ENCODE measurements at regions of chr6 and their contacts with region 1.

Region 1: DNA sequence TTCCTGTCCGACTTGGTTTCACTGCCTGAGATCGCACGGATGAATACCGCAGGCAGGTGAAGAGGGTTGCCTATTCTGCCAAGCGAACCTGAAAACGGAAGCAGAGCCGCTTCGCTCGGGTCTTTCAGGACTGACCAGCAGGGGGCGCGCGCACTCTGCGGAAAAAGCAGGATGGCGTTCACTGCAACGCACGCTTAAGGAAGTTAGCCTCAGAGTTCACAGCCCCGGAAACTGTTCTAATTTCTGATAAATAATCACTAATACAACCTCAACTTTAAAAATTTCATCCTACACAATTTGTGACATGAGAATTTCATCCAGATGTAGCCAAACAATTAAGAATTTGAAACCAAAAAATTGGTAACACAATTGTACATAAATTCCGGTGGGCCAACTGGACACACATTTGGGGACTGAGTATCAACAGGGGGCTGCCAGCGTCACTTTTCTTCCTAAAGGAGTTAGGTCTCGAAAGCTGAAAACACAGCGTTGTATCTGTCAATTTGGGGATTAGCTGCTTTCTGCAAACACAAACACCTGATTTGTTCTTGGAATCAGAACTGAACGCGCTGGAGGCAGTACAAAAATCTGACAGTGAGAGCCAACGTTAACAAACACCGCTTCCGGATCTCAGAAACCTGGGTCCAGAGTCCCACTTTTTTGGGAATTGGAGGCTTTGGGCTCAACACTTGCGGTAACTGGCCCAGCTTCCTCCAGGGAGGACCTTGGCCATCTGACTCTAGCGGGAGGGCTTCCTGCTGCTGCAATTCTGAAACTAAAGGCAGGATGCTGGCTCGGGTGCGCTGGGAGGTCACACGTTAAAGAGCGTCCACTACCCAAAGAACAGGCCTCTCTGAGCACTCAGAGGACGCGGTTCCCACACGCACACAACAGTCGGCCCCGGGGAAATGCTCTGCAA is 8.8 kb downstream of the PXDC1 start:
- DNase-seq: peak; percentile 63 to 85
- H3K4me3 ChIP-seq: no peak overlapping the region
- H3K27ac ChIP-seq: no peak overlapping the region
- H3K4me1 ChIP-seq: peaks cover 5% of the 10 kb centered on the region; the same call in 1 of the 2 replicates
- H3K27me3 ChIP-seq: no peaks in the 10 kb centered on the region
- CTCF ChIP-seq: peak; percentile 82

Region 2: GRCh38 chr6:3456755-3457466 is 285.8 kb before region 1 on chr6 and contains the start of gene SLC22A23:
- CTCF ChIA-PET with region 1: no interaction called
- POLR2A ChIA-PET with region 1: no interaction called
- intact Hi-C with region 1: no loop called
- DNase-seq: peak; percentile 47 to 83
- H3K4me3 ChIP-seq: peak within 1 kb of the TSS; percentile 84
- H3K27ac ChIP-seq: no peak within 1 kb of the TSS
- H3K4me1 ChIP-seq: peaks cover 14% of the 10 kb centered on the region
- H3K27me3 ChIP-seq: no peaks in the 10 kb centered on the region
- CTCF ChIP-seq: peak; percentile 58; the same call in 1 of the 2 replicates
- total RNA-seq, gene SLC22A23: 13.5 and 16.3 TPM in 2 replicates

Region 3: GRCh38 chr6:3721810-3722626 is 20.7 kb before region 1 on chr6:
- CTCF ChIA-PET with region 1: no interaction called
- POLR2A ChIA-PET with region 1: no interaction called
- intact Hi-C with region 1: no loop called
- DNase-seq: no peak
- H3K4me3 ChIP-seq: no peak overlapping the region
- H3K27ac ChIP-seq: no peak overlapping the region
- H3K4me1 ChIP-seq: no peaks in the 10 kb centered on the region
- H3K27me3 ChIP-seq: no peaks in the 10 kb centered on the region
- CTCF ChIP-seq: no peak

Region 4: GRCh38 chr6:3813150-3813780 is 70.6 kb after region 1 on chr6:
- CTCF ChIA-PET with region 1: no interaction called
- POLR2A ChIA-PET with region 1: no interaction called
- intact Hi-C with region 1: no loop called
- DNase-seq: peak; percentile 40 to 54
- H3K4me3 ChIP-seq: no peak overlapping the region
- H3K27ac ChIP-seq: no peak overlapping the region; the same call in 1 of the 2 replicates
- H3K4me1 ChIP-seq: peaks cover 37% of the 10 kb centered on the region
- H3K27me3 ChIP-seq: no peaks in the 10 kb centered on the region
- CTCF ChIP-seq: no peak

Region 5: DNA sequence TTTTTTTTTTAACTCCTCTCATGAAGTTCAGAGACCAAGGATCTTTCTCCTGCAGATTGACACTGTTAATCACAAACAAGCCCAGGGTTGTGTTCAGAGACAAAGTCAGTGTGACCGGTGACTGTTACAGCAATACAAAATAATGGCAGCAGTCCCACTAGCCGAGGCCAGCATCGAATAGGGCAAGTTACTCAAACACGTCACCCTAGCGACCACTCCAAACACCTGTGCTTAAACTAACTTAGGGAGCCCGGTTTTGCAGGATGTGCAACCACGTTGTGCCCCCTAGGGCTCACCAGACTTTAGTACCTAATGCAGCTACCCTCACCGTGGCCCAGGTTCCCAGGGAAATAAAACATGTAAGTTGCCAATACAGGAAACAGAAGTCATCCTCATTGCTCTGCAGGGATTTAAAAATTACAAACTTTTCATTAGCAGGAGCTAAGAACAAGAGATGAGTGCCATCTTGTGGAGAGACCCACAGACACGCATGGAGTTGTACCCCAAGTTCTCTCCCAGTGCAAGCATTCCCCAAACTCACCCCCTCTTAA is 144.5 kb after region 1 on chr6:
- CTCF ChIA-PET with region 1: no interaction called
- POLR2A ChIA-PET with region 1: no interaction called
- intact Hi-C with region 1: loop called (anchors 2 kb)
- DNase-seq: peak; percentile 28 to 69
- H3K4me3 ChIP-seq: no peak overlapping the region
- H3K27ac ChIP-seq: no peak overlapping the region
- H3K4me1 ChIP-seq: peaks cover 40% of the 10 kb centered on the region
- H3K27me3 ChIP-seq: no peaks in the 10 kb centered on the region
- CTCF ChIP-seq: 0 out of 2 replicates have a peak, but pooled peaks have one; percentile 37

Region 6: GRCh38 chr6:3919130-3919628 is 176.5 kb after region 1 on chr6:
- CTCF ChIA-PET with region 1: no interaction called
- POLR2A ChIA-PET with region 1: no interaction called
- intact Hi-C with region 1: no loop called
- DNase-seq: peak; percentile 48 to 90
- H3K4me3 ChIP-seq: no peak overlapping the region
- H3K27ac ChIP-seq: peak overlapping the region; percentile 50
- H3K4me1 ChIP-seq: peaks cover 17% of the 10 kb centered on the region
- H3K27me3 ChIP-seq: no peaks in the 10 kb centered on the region
- CTCF ChIP-seq: no peak

Region 7: GRCh38 chr6:3929281-3929798 is 186.7 kb after region 1 on chr6:
- CTCF ChIA-PET with region 1: no interaction called
- POLR2A ChIA-PET with region 1: no interaction called
- intact Hi-C with region 1: loop called (anchors 5 kb)
- DNase-seq: no peak
- H3K4me3 ChIP-seq: no peak overlapping the region
- H3K27ac ChIP-seq: no peak overlapping the region
- H3K4me1 ChIP-seq: no peaks in the 10 kb centered on the region
- H3K27me3 ChIP-seq: no peaks in the 10 kb centered on the region
- CTCF ChIP-seq: no peak

Region 8: GRCh38 chr6:3977875-3978711 is 235.4 kb after region 1 on chr6:
- CTCF ChIA-PET with region 1: no interaction called
- POLR2A ChIA-PET with region 1: no interaction called
- intact Hi-C with region 1: loop called (anchors 1 kb)
- DNase-seq: peak; percentile 43 to 65
- H3K4me3 ChIP-seq: no peak overlapping the region
- H3K27ac ChIP-seq: no peak overlapping the region
- H3K4me1 ChIP-seq: no peaks in the 10 kb centered on the region
- H3K27me3 ChIP-seq: no peaks in the 10 kb centered on the region
- CTCF ChIP-seq: peak; percentile 73

Region 9: DNA sequence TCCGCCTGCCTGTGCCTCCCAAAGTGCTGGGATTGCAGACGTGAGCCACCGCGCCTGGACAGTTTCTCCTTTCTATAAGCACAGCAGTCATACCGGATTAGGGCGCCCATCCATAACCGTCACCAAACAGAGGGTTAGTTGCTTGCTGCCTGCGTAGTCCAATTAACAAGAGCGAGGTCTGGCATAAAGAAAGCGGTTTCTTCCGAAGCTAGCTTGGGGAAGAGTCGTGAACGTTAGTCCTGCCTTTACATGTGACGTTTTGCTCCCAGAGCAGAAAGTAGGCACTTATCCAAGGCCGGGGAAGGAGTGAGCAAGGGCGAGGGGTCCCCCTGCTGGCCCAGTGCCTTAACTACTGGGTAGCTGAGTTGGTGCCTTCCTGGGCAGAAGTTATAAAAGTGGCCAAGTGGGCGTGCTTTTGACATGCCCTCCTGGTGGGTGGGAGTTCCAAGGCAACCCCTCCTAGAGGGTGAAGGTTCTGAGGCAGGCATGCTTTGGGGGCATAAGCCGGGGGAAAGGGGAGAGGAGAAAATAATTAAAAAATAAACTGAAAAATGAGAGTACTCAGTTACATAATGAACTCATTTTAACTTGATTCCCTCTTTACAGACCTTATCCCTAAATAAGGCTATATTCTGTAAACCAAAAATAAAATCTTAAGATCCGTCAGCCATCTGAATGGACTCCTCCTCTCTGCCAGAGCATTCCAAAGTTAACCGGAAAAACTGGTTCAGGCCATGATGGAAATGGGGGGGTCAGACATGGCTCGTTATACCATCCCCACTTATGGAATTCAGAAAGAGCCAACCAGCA is 248.2 kb after region 1 on chr6:
- CTCF ChIA-PET with region 1: interaction called, 3 read pairs
- POLR2A ChIA-PET with region 1: no interaction called
- intact Hi-C with region 1: loop called (anchors 1 kb)
- DNase-seq: peak; percentile 53 to 80
- H3K4me3 ChIP-seq: peak overlapping the region; percentile 39; the same call in 1 of the 2 replicates
- H3K27ac ChIP-seq: peak overlapping the region; percentile 47; the same call in 1 of the 2 replicates
- H3K4me1 ChIP-seq: peaks cover 14% of the 10 kb centered on the region
- H3K27me3 ChIP-seq: no peaks in the 10 kb centered on the region
- CTCF ChIP-seq: peak; percentile 90

Region 10: DNA sequence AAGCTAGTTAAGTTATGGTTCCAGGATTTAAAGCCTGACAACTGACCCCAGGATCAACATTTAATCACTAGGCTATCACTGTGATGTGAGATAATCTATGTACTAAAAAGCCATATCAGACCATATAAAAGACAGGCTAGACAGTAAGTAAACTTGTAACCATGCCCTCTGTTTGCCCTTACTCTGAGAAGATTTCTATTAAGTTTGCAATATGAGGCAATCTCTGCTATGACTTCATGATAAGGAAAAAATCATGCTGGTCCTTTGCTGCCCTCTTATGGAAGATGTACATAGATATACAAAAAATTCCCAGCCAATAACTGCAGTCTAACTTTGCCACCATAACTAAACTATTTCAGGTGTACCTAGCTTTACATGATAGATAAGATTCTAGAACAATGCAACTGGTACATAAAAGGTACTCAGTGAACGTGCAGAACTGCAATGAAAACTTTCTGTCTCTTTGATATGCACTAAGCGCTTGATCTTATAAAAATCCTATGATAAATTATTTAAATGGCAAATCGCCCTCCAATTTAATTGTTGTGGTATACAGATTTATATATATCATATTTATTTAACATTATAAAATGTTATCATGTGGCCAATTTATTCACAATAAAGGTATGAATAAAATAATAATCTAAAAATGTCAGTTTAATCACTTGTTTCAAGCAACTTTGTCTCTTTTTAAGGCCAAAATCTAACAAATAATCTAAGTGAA is 265.8 kb after region 1 on chr6:
- CTCF ChIA-PET with region 1: interaction called, 5 read pairs
- POLR2A ChIA-PET with region 1: no interaction called
- intact Hi-C with region 1: loop called (anchors 1 kb)
- DNase-seq: peak in 1 of 2 experiments; percentile 75
- H3K4me3 ChIP-seq: no peak overlapping the region
- H3K27ac ChIP-seq: peak overlapping the region; percentile 54
- H3K4me1 ChIP-seq: peaks cover 5% of the 10 kb centered on the region
- H3K27me3 ChIP-seq: no peaks in the 10 kb centered on the region
- CTCF ChIP-seq: peak; percentile 70

Region 11: DNA sequence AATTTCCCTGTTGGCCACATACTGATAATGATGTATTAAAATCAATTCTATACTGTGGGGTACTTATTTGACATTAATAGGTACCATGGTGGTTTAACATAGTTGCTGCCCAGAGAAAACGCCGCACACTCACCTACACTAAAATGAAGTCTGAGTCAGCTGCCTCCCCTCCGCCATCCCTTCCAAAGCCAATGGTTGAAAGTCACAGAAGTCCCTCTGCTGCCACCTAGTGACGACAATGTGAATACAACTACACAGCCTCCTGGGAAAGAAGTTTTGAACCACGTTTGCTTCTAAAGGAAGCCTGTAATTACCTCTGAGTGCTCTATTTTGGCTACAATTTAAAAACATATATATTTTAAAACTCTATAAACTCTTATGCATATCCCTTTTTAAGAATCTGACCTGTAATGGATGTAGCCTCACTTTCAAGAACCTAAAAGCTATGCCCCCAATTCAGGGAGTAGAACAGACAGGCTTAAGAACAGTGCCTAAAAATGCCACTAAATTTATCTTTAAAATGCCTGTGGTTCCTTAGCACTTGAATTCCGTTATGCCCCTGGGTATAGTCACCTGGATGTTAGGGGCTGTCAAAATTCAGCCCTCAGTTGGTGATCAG is 413.3 kb after region 1 on chr6:
- CTCF ChIA-PET with region 1: no interaction called
- POLR2A ChIA-PET with region 1: no interaction called
- intact Hi-C with region 1: loop called (anchors 2 kb)
- DNase-seq: peak; percentile 60 to 61
- H3K4me3 ChIP-seq: no peak overlapping the region
- H3K27ac ChIP-seq: no peak overlapping the region
- H3K4me1 ChIP-seq: no peaks in the 10 kb centered on the region
- H3K27me3 ChIP-seq: no peaks in the 10 kb centered on the region
- CTCF ChIP-seq: peak; percentile 80

Measured in PC-9 (cell line).